CD8-positive, alpha-beta memory T cell (primary cell): ENCODE measurements at regions of chr11 and their contacts with region 1.

Region 1: DNA sequence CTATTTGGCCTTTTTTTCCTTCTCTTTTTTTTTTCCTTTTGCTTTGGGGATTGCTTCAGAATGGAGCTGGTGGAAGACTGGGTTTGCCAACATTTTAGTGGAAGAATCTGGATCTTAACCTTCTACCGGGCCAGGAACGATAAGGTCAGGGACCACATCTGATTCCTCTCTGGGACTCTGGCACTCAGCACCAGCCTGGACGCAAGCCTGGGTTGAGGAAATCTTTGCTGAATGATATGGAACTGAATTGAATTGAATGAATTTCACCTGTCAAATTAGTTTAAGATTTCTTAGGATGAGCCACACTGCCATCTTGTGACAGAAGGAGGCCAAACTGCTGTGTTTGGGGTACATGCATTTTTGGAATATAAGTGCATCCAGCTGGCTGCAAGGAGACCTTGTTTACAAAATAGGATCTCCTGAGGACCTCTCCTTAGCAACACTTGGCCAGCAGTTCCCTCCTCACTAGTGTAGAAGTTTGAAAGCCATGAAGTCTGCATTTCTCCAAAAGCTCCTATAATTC is 30.4 kb downstream of the TPBGL start:
- DNase-seq: peak in 2 of 5 donors; percentile 26 to 48
- H3K4me3 ChIP-seq: no peak overlapping the region
- H3K4me3 Mint-ChIP-seq: no peak overlapping the region
- H3K27ac ChIP-seq: no peak overlapping the region
- H3K27ac Mint-ChIP-seq: peak overlapping the region; percentile 33 to 85 (median 70)
- H3K4me1 ChIP-seq: peaks cover 48% of the 10 kb centered on the region
- H3K4me1 Mint-ChIP-seq: peaks cover 31 to 41% (median 34%) of the 10 kb centered on the region in 3 donors
- H3K27me3 ChIP-seq: no peaks in the 10 kb centered on the region
- H3K27me3 Mint-ChIP-seq: no peaks in the 10 kb centered on the region

Region 2: DNA sequence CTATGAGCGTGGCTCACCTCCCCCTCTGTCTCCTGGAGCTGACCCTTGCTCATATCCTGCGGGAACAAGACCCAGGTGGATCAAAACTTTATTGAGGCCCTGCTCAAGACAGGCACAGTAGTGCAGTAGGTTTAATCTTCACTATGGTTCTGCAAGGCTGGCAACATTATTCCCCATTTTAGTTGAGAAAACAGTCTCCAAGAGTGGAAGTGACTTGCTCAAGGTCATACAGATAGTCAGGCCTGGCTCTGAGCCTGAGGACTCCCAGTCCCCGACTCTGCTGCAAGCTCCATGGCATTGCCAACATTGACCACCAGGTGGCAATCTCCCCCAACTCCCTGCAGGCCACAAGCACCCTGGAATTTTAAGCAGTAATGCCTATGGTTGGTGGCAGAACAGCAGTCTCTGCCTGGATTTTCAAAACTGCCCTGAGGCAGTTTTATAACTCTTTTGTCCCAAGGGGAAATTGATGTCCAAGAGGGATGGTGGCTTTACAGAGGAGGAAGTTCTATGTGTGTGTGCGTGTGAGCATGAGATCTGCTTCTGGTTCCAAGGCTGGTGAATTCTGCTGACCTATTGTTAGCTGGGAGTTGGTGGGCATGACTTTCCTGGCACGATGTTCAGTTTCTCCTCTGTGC is 248.1 kb before region 1 on chr11:
- CTCF ChIA-PET with region 1: interaction called, 13 read pairs
- POLR2A ChIA-PET with region 1: no interaction called
- DNase-seq: peak; percentile 50 to 76 (median 52)
- H3K4me3 ChIP-seq: no peak overlapping the region
- H3K4me3 Mint-ChIP-seq: no peak overlapping the region
- H3K27ac ChIP-seq: no peak overlapping the region
- H3K27ac Mint-ChIP-seq: no peak overlapping the region
- H3K4me1 ChIP-seq: no peaks in the 10 kb centered on the region
- H3K4me1 Mint-ChIP-seq: no peaks in the 10 kb centered on the region
- H3K27me3 ChIP-seq: no peaks in the 10 kb centered on the region
- H3K27me3 Mint-ChIP-seq: no peaks in the 10 kb centered on the region

Region 3: DNA sequence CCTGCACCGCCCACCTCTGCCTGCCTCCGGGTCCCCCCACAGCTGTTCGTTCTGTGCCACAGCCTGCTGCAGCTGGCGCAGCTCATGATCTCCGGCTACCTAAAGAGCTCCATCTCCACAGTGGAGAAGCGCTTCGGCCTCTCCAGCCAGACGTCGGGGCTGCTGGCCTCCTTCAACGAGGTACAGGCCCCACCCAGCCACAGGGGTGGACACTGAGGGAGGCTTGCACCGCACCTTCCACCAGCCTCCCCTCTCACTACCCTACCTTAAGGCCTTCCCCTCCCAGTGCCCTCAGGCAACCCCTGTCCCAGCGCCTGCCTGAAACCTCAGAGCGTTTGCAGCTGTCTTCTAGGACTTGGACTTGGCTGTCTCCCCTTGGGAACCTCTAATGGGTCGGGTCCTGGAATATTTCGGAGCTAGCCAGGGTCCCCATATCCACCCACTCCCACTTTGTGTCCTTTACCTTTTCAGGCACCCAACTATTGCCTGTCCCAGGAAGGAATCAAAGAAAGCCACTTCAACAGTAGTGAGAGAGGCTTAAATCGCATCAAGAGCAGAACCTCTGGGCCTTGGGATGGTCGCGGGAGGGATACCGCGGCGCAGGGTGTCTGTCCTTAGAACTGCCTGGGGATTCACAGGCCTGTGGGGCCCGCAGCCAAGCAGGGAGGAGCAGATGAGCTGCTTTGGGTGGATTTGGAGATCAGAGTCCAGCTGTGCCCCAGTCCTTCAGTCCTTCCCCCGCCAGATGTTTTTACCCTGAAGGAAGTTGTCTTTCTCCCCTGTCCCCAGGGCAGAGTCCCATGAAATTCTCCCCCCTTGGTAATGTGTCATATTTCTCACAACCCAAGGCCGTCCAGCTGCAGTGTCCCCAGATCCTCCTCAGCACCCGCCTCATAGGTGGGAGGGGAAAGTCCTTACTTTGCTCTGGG is 106.8 kb before region 1 on chr11:
- CTCF ChIA-PET with region 1: no interaction called
- POLR2A ChIA-PET with region 1: no interaction called
- DNase-seq: no peak
- H3K4me3 ChIP-seq: no peak overlapping the region
- H3K4me3 Mint-ChIP-seq: no peak overlapping the region
- H3K27ac ChIP-seq: no peak overlapping the region
- H3K27ac Mint-ChIP-seq: no peak overlapping the region
- H3K4me1 ChIP-seq: no peaks in the 10 kb centered on the region
- H3K4me1 Mint-ChIP-seq: no peaks in the 10 kb centered on the region
- H3K27me3 ChIP-seq: no peaks in the 10 kb centered on the region
- H3K27me3 Mint-ChIP-seq: peaks cover 10 to 12% of the 10 kb centered on the region in 2 donors

Region 4: DNA sequence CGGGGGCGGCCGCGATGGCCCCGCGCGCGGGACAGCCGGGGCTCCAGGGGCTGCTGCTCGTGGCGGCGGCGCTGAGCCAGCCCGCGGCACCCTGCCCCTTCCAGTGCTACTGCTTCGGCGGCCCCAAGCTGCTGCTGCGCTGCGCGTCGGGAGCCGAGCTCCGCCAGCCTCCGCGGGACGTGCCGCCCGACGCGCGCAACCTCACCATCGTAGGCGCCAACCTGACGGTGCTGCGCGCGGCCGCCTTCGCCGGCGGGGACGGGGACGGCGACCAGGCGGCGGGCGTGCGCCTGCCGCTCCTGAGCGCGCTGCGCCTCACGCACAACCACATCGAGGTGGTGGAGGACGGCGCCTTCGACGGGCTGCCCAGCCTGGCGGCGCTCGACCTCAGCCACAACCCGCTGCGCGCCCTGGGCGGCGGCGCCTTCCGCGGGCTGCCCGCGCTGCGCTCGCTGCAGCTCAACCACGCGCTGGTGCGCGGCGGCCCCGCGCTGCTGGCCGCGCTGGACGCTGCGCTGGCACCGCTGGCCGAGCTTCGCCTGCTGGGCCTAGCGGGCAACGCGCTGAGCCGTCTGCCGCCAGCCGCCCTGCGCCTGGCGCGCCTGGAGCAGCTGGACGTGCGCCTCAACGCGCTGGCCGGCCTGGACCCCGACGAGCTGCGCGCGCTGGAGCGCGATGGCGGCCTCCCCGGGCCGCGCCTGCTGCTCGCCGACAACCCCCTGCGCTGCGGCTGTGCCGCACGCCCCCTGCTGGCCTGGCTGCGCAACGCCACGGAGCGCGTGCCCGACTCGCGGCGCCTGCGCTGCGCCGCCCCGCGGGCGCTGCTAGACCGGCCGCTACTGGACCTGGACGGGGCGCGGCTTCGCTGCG is 29.7 kb before region 1 on chr11:
- CTCF ChIA-PET with region 1: interaction called, 52 read pairs
- POLR2A ChIA-PET with region 1: no interaction called
- DNase-seq: peak; percentile 77 to 84 (median 83)
- H3K4me3 ChIP-seq: no peak overlapping the region
- H3K4me3 Mint-ChIP-seq: peak overlapping the region; percentile 68 to 89 (median 74)
- H3K27ac ChIP-seq: no peak overlapping the region
- H3K27ac Mint-ChIP-seq: no peak overlapping the region
- H3K4me1 ChIP-seq: peaks cover 8% of the 10 kb centered on the region
- H3K4me1 Mint-ChIP-seq: peaks cover 0 to 23% (median 5%) of the 10 kb centered on the region in 3 donors
- H3K27me3 ChIP-seq: peaks cover 20% of the 10 kb centered on the region
- H3K27me3 Mint-ChIP-seq: peaks cover 25 to 49% of the 10 kb centered on the region in 2 donors

Region 5: GRCh38 chr11:75248690-75249268 is 22.2 kb before region 1 on chr11:
- CTCF ChIA-PET with region 1: interaction called, 27 read pairs
- POLR2A ChIA-PET with region 1: interaction called, 3 read pairs
- DNase-seq: peak; percentile 77 to 88 (median 78)
- H3K4me3 ChIP-seq: no peak overlapping the region
- H3K4me3 Mint-ChIP-seq: no peak overlapping the region
- H3K27ac ChIP-seq: no peak overlapping the region
- H3K27ac Mint-ChIP-seq: no peak overlapping the region
- H3K4me1 ChIP-seq: no peaks in the 10 kb centered on the region
- H3K4me1 Mint-ChIP-seq: no peaks in the 10 kb centered on the region
- H3K27me3 ChIP-seq: no peaks in the 10 kb centered on the region
- H3K27me3 Mint-ChIP-seq: peaks cover 15% of the 10 kb centered on the region in 2 donors

Region 6: GRCh38 chr11:75399344-75400145 is 128.6 kb after region 1 on chr11 and contains the start of gene RPS3:
- CTCF ChIA-PET with region 1: interaction called, 16 read pairs
- POLR2A ChIA-PET with region 1: interaction called, 3 read pairs
- DNase-seq: peak; percentile 78 to 92 (median 85)
- H3K4me3 ChIP-seq: peak within 1 kb of the TSS; percentile 73
- H3K4me3 Mint-ChIP-seq: peak within 1 kb of the TSS; percentile 91 to 98 (median 95)
- H3K27ac ChIP-seq: peak within 1 kb of the TSS; percentile 88
- H3K27ac Mint-ChIP-seq: peak within 1 kb of the TSS; percentile 87 to 99 (median 96)
- H3K4me1 ChIP-seq: peaks cover 25% of the 10 kb centered on the region
- H3K4me1 Mint-ChIP-seq: peaks cover 48 to 53% (median 48%) of the 10 kb centered on the region in 3 donors
- H3K27me3 ChIP-seq: no peaks in the 10 kb centered on the region
- H3K27me3 Mint-ChIP-seq: no peaks in the 10 kb centered on the region
- total RNA-seq, gene RPS3: 3,916 to 3,935 TPM

Region 7: GRCh38 chr11:75445315-75445953 is 174.5 kb after region 1 on chr11:
- CTCF ChIA-PET with region 1: no interaction called
- POLR2A ChIA-PET with region 1: no interaction called
- DNase-seq: peak; percentile 55 to 79 (median 65)
- H3K4me3 ChIP-seq: no peak overlapping the region
- H3K4me3 Mint-ChIP-seq: no peak overlapping the region
- H3K27ac ChIP-seq: no peak overlapping the region
- H3K27ac Mint-ChIP-seq: peak overlapping the region in 1 of 8 donors; percentile 54
- H3K4me1 ChIP-seq: no peaks in the 10 kb centered on the region
- H3K4me1 Mint-ChIP-seq: no peaks in the 10 kb centered on the region
- H3K27me3 ChIP-seq: no peaks in the 10 kb centered on the region
- H3K27me3 Mint-ChIP-seq: peaks cover 0 to 3% of the 10 kb centered on the region in 2 donors